Activated naive CD4-positive, alpha-beta T cell treated with anti-CD3 and anti-CD28 coated beads, Interleukin-2, amount 10 ng/mL, durations not matched to agents 7 days and 5 days (primary cell): ENCODE measurements at regions of chr12 and their contacts with region 1.

Region 1: DNA sequence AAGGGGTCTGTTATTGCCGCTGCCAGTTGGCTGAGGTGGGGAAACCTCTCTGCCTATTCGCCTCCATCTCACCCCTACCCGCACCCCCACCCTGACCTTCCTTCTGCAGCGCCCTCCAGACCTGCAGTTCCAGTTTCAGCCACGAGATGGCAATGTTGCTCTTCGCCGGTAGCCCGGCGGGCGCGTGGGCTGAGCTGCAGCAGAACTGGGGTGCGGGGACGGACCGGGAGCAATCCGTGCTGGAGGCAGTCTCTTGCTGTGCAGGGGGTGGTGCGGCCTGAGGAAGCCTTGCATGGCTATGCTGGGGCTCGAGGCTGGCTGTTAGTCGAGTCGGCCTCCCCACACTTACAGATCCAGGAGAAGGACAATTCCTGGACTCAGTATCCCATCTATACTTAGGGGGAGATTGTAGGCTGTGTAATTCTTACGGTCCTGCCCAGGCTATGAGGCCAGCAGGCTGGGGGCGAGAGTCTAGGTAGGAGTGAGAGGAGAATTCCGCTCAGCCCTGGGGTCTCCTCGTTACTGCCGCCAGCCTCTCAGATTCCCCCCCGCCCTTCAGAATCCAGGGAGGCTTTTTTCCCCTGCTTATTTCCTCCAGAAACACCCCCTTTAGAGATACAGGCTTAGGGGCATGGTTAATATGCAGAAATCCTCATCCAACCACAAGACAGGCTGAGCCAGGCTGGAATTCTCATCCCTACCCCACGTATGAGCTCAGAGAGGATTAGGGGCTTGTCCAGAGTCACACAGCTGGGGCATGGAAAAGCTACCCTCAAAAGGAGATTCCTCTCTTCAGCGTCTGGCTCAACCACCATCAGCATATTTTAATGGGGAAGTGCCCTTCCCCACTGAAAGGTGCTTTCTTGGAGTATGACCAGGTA is 118.2 kb downstream of the AACS start:
- DNase-seq: peak; percentile 83
- H3K4me3 Mint-ChIP-seq: no peak overlapping the region
- H3K27ac Mint-ChIP-seq: no peak overlapping the region
- H3K4me1 Mint-ChIP-seq: peaks cover 4% of the 10 kb centered on the region
- H3K27me3 Mint-ChIP-seq: peaks cover 67% of the 10 kb centered on the region

Region 2: GRCh38 chr12:125402874-125403789 is 219.7 kb after region 1 on chr12:
- CTCF ChIA-PET with region 1: interaction called, 24 read pairs
- DNase-seq: no peak
- H3K4me3 Mint-ChIP-seq: no peak overlapping the region
- H3K27ac Mint-ChIP-seq: no peak overlapping the region
- H3K4me1 Mint-ChIP-seq: no peaks in the 10 kb centered on the region
- H3K27me3 Mint-ChIP-seq: peaks cover 3% of the 10 kb centered on the region